ENCODE measurements at regions of chr18 and their contacts with region 1.

Region 1: GRCh38 chr18:46250084-46250811 is 146.1 kb downstream of the HAUS1 start:
- DNase-seq: peak; percentile 92
- ATAC-seq: peak; percentile 98
- H3K4me3 ChIP-seq: peak overlapping the region; percentile 41; the same call in 1 of the 2 replicates
- H3K27ac ChIP-seq: peak overlapping the region; percentile 75
- H3K4me1 ChIP-seq: peaks cover 22% of the 10 kb centered on the region
- H3K27me3 ChIP-seq: no peaks in the 10 kb centered on the region
- CTCF ChIP-seq: no peak
- EP300 ChIP-seq: peak; percentile 60 to 73; a peak in 2 of 4 replicates
- POLR2A ChIP-seq: no peak
- RAD21 ChIP-seq: no peak

Region 2: GRCh38 chr18:45303026-45303425 is 947.2 kb before region 1 on chr18:
- CTCF ChIA-PET with region 1: no interaction called
- POLR2A ChIA-PET with region 1: no interaction called
- RAD21 ChIA-PET with region 1: no interaction called
- SMC1A ChIA-PET with region 1: no interaction called
- in situ Hi-C with region 1: no loop called
- intact Hi-C with region 1: no loop called
- DNase-seq: no peak
- ATAC-seq: no peak
- H3K4me3 ChIP-seq: no peak overlapping the region
- H3K27ac ChIP-seq: no peak overlapping the region
- H3K4me1 ChIP-seq: no peaks in the 10 kb centered on the region
- H3K27me3 ChIP-seq: no peaks in the 10 kb centered on the region; a peak in 2 of 4 replicates
- CTCF ChIP-seq: no peak
- EP300 ChIP-seq: no peak
- POLR2A ChIP-seq: no peak
- RAD21 ChIP-seq: no peak

Region 3: GRCh38 chr18:45978084-45978483 is 272.2 kb before region 1 on chr18:
- CTCF ChIA-PET with region 1: no interaction called
- POLR2A ChIA-PET with region 1: no interaction called
- RAD21 ChIA-PET with region 1: no interaction called
- SMC1A ChIA-PET with region 1: no interaction called
- in situ Hi-C with region 1: no loop called
- intact Hi-C with region 1: no loop called
- DNase-seq: no peak
- ATAC-seq: peak; percentile 66
- H3K4me3 ChIP-seq: no peak overlapping the region
- H3K27ac ChIP-seq: no peak overlapping the region
- H3K4me1 ChIP-seq: no peaks in the 10 kb centered on the region
- H3K27me3 ChIP-seq: no peaks in the 10 kb centered on the region
- CTCF ChIP-seq: no peak
- EP300 ChIP-seq: no peak
- POLR2A ChIP-seq: no peak
- RAD21 ChIP-seq: no peak

Region 4: DNA sequence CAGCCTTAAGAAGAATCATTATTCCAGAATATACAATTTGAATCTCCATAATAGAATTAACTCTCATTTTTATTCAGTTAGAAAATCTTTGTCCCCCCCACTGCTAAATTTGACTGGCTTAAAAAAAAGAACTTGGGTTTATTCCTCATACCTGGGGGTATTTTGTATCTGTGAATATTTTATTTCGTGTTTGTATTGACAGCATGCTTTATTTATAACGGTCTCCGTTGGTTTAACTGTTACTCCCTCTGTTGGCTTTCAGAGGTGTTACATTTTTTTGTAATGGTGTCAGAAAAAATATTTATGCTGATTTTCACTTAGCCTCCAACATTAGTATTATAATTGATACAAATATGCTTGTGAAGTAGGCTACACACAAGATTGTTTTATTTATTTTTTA is 37.0 kb before region 1 on chr18:
- CTCF ChIA-PET with region 1: interaction called, 3 read pairs
- POLR2A ChIA-PET with region 1: interaction called, 5 read pairs
- RAD21 ChIA-PET with region 1: no interaction called
- SMC1A ChIA-PET with region 1: interaction called, 11 read pairs
- in situ Hi-C with region 1: no loop called
- intact Hi-C with region 1: no loop called
- DNase-seq: no peak
- ATAC-seq: peak; percentile 59; the same call in 2 of the 3 replicates
- H3K4me3 ChIP-seq: no peak overlapping the region
- H3K27ac ChIP-seq: no peak overlapping the region
- H3K4me1 ChIP-seq: peaks cover 12% of the 10 kb centered on the region
- H3K27me3 ChIP-seq: no peaks in the 10 kb centered on the region
- CTCF ChIP-seq: peak; percentile 38 to 46 (median 39); a peak in 5 of 6 replicates
- EP300 ChIP-seq: no peak
- POLR2A ChIP-seq: no peak
- RAD21 ChIP-seq: peak; percentile 67

Measured in GM12878 (cell line).